ENCODE measurements at regions of chr6 and their contacts with region 1.

Region 1: DNA sequence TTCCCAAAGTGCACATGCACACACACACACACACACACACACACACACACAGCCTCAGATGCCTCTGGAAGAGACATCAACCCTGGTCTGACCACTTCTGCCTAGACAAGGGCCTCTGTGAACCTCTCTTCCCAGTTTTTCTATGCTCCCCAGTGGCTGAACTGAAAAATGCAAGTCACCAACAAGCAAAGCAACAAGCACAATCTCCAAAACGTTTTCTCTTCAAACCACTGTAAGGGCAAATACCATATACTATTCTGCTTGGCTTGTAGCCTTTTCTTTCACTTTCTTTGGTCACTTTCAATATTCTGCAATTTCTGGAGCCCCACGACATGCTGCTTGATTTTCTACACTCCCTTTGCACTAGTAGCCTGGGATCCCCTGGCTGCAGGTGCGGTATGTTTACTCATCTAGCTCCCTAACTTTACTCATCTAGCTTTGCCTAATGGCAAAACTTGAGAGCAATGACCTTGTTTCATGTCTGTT is 121.4 kb upstream of the DST start:
- DNase-seq: peak; percentile 84
- ATAC-seq: peak; percentile 51
- H3K4me3 ChIP-seq: peak overlapping the region; percentile 22; the same call in 1 of the 2 replicates
- H3K27ac ChIP-seq: peak overlapping the region; percentile 65
- H3K4me1 ChIP-seq: peaks cover 86% of the 10 kb centered on the region
- H3K27me3 ChIP-seq: no peaks in the 10 kb centered on the region
- CTCF ChIP-seq: peak; percentile 44 to 57 (median 57); a peak in 4 of 6 replicates
- EP300 ChIP-seq: peak in 1 of 2 experiments; percentile 30; a peak in 2 of 4 replicates
- POLR2A ChIP-seq: no peak
- RAD21 ChIP-seq: peak; percentile 60

Region 2: GRCh38 chr6:56542364-56543331 is 221.5 kb before region 1 on chr6:
- CTCF ChIA-PET with region 1: interaction called, 4 read pairs
- POLR2A ChIA-PET with region 1: no interaction called
- RAD21 ChIA-PET with region 1: interaction called, 11 read pairs
- SMC1A ChIA-PET with region 1: interaction called, 4 read pairs
- in situ Hi-C with region 1: no loop called
- intact Hi-C with region 1: no loop called
- DNase-seq: peak; percentile 91
- ATAC-seq: peak; percentile 93
- H3K4me3 ChIP-seq: peak overlapping the region; percentile 73
- H3K27ac ChIP-seq: peak overlapping the region; percentile 70
- H3K4me1 ChIP-seq: peaks cover 13% of the 10 kb centered on the region; the same call in 1 of the 2 replicates
- H3K27me3 ChIP-seq: no peaks in the 10 kb centered on the region
- CTCF ChIP-seq: peak in 2 of 3 experiments; percentile 6 to 11; a peak in 2 of 6 replicates
- EP300 ChIP-seq: 0 out of 4 replicates have a peak, but pooled peaks of 1 of the 2 experiments have one; percentile 7
- POLR2A ChIP-seq: peak; percentile 90
- RAD21 ChIP-seq: no peak

Region 3: GRCh38 chr6:56752009-56752408 is 12.1 kb before region 1 on chr6:
- CTCF ChIA-PET with region 1: interaction called, 28 read pairs
- POLR2A ChIA-PET with region 1: interaction called, 5 read pairs
- RAD21 ChIA-PET with region 1: interaction called, 48 read pairs
- SMC1A ChIA-PET with region 1: interaction called, 67 read pairs
- in situ Hi-C with region 1: no loop called
- intact Hi-C with region 1: no loop called
- DNase-seq: no peak
- ATAC-seq: 0 out of 3 replicates have a peak, but pooled peaks have one; percentile 18
- H3K4me3 ChIP-seq: no peak overlapping the region
- H3K27ac ChIP-seq: no peak overlapping the region
- H3K4me1 ChIP-seq: peaks cover 38% of the 10 kb centered on the region
- H3K27me3 ChIP-seq: no peaks in the 10 kb centered on the region
- CTCF ChIP-seq: no peak
- EP300 ChIP-seq: no peak
- POLR2A ChIP-seq: no peak
- RAD21 ChIP-seq: no peak

Region 4: DNA sequence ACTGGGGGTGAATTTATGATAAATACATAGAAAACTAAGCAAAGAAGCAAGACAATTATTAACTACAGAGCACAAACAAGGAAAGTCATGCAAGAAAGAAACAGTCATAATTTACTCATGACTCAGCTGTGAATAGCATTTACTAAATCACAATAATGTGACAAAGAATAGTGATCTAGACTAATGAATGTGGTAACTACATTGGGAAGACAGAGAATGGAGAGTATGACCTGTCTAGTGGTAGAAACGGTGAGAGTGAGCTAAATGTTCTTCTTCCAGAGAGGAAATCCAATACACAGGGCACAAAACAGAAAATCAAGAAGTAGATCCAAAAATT is 32.0 kb after region 1 on chr6:
- CTCF ChIA-PET with region 1: interaction called, 18 read pairs
- POLR2A ChIA-PET with region 1: interaction called, 8 read pairs
- RAD21 ChIA-PET with region 1: interaction called, 15 read pairs
- SMC1A ChIA-PET with region 1: interaction called, 26 read pairs
- in situ Hi-C with region 1: no loop called
- intact Hi-C with region 1: loop called (anchors 2 kb)
- DNase-seq: no peak
- ATAC-seq: peak; percentile 71
- H3K4me3 ChIP-seq: no peak overlapping the region
- H3K27ac ChIP-seq: 0 out of 2 replicates have a peak overlapping the region, but pooled peaks have one; percentile 47
- H3K4me1 ChIP-seq: peaks cover 49% of the 10 kb centered on the region
- H3K27me3 ChIP-seq: no peaks in the 10 kb centered on the region
- CTCF ChIP-seq: no peak
- EP300 ChIP-seq: peak in 1 of 2 experiments; percentile 34; a peak in 1 of 4 replicates
- POLR2A ChIP-seq: no peak
- RAD21 ChIP-seq: no peak

Region 5: GRCh38 chr6:56827908-56828649 is 64.0 kb after region 1 on chr6:
- CTCF ChIA-PET with region 1: interaction called, 5 read pairs
- POLR2A ChIA-PET with region 1: no interaction called
- RAD21 ChIA-PET with region 1: interaction called, 17 read pairs
- SMC1A ChIA-PET with region 1: interaction called, 10 read pairs
- in situ Hi-C with region 1: no loop called
- intact Hi-C with region 1: no loop called
- DNase-seq: no peak
- ATAC-seq: no peak; the same call in 2 of the 3 replicates
- H3K4me3 ChIP-seq: no peak overlapping the region
- H3K27ac ChIP-seq: no peak overlapping the region; the same call in 1 of the 2 replicates
- H3K4me1 ChIP-seq: peaks cover 16% of the 10 kb centered on the region; the same call in 1 of the 2 replicates
- H3K27me3 ChIP-seq: no peaks in the 10 kb centered on the region
- CTCF ChIP-seq: no peak
- EP300 ChIP-seq: no peak
- POLR2A ChIP-seq: no peak
- RAD21 ChIP-seq: no peak

Region 6: DNA sequence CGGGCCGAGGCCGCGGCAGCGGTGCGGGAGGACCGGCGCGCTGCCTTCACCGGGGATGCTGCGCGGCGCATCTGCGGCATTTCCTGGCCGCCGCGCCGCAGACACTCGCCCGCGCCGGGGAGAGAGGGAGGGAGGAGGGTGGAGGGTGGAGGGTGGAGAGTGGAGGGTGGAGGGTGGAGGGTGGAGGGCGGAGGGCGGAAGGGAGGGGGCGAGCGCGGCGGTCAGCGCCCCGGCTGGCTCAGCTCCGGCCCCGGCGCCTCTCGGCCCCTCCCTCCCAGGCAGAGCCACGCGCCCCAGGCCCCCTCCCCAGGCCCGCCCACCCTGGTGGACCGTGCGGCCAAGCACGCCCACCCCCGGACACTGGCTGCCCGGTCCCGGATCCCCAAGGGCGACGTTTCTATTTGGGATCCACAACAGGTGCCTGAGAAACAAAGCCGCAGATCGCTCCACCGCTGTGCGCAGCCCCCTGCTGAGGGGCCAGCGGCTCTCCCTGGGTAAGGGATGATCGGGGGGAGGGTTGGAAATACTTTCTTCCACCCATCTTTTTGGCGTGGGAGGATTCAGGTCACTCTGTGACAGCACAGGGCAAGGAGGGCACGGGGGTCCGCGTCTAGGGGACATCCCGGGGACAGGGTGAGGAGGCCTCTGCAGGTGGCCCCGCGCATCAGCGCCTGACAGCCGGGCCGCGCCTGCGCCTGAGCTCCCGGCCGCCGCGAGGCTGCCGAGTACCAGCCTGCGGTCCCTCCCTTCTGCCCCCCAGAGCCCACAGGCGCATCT is 79.6 kb after region 1 on chr6:
- CTCF ChIA-PET with region 1: interaction called, 494 read pairs
- POLR2A ChIA-PET with region 1: interaction called, 13 read pairs
- RAD21 ChIA-PET with region 1: interaction called, 450 read pairs
- SMC1A ChIA-PET with region 1: interaction called, 358 read pairs
- in situ Hi-C with region 1: loop called (anchors 5 kb)
- intact Hi-C with region 1: loop called (anchors 5 kb)
- DNase-seq: peak; percentile 66
- ATAC-seq: peak; percentile 91
- H3K4me3 ChIP-seq: peak overlapping the region; percentile 95
- H3K27ac ChIP-seq: peak overlapping the region; percentile 82
- H3K4me1 ChIP-seq: peaks cover 45% of the 10 kb centered on the region
- H3K27me3 ChIP-seq: no peaks in the 10 kb centered on the region
- CTCF ChIP-seq: peak; percentile 66 to 70 (median 70); a peak in 5 of 6 replicates
- EP300 ChIP-seq: no peak
- POLR2A ChIP-seq: peak; percentile 71
- RAD21 ChIP-seq: peak; percentile 67